H1 (cell line): ENCODE measurements at regions of chr15 and their contacts with region 1.

Region 1: GRCh38 chr15:77784395-77785292 is 151.9 kb upstream of the LINGO1 start:
- DNase-seq: peak in 1 of 2 experiments; percentile 88
- H3K4me3 ChIP-seq: no peak overlapping the region
- H3K27ac ChIP-seq: no peak overlapping the region
- H3K4me1 ChIP-seq: peaks cover 0 to 10% (median 7%) of the 10 kb centered on the region in 4 experiments; a peak in 6 of 7 replicates
- H3K27me3 ChIP-seq: no peaks in the 10 kb centered on the region
- CTCF ChIP-seq: peak; percentile 55 to 81 (median 79)
- EP300 ChIP-seq: no peak
- POLR2A ChIP-seq: no peak
- RAD21 ChIP-seq: peak; percentile 67 to 78

Region 2: DNA sequence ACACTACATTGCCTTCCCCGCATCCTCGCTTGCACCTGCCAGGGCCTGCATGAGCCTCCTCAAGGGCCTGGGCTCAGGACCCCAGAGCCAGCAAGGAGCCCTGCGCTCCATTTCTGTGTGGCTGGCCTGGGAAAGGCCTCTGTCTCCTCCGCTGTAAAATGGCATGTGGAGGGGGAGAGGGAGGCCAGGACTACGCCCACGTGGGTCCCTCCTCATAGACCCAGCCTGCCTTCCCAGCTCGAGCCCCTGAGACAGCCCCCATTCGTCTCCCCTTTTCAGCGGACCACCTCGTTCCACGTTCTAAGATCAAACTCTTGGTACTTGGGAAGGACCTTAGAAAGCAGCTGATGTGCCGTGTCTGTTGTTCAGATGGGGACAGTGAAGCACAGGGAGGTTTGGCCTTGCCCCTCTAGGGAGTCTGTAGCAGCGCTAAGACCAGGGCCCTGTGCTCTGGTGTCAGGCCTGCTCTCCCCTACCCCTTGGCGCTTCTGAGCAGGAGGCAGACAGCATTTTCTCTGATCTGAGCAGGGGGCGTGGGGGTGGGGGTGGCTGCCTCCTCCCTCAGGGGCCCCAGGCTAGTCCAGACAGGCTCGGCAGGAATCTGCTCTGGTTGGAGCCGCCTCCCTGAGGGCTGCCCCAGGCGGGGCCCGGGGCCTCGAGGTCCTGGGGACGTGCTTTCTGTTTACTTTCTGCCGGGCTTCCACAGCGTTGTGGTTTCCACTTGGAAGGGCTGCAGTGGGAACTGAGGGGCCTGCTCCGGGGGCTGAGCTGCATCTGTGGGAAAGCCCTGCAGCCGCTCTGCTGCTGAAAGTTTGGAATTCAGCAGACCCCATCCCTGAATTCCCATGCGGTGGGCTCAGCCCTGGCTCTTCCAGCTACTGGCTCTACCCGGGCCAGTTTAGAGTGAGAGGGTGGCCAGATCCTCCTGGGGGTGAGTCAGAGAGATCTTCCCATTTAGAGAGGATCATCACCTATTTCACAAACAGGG is 257.6 kb before region 1 on chr15:
- CTCF ChIA-PET with region 1: no interaction called
- POLR2A ChIA-PET with region 1: no interaction called
- DNase-seq: no peak
- H3K4me3 ChIP-seq: no peak overlapping the region; a peak in 1 of 8 replicates
- H3K27ac ChIP-seq: no peak overlapping the region
- H3K4me1 ChIP-seq: peaks cover 0 to 28% (median 6%) of the 10 kb centered on the region in 4 experiments; a peak in 6 of 7 replicates
- H3K27me3 ChIP-seq: no peaks in the 10 kb centered on the region; a peak in 1 of 7 replicates
- CTCF ChIP-seq: no peak
- EP300 ChIP-seq: no peak
- POLR2A ChIP-seq: no peak
- RAD21 ChIP-seq: no peak

Region 3: GRCh38 chr15:77659350-77660321 is 125.0 kb before region 1 on chr15:
- CTCF ChIA-PET with region 1: interaction called, 48 read pairs
- POLR2A ChIA-PET with region 1: interaction called, 3 read pairs
- DNase-seq: peak in 1 of 2 experiments; percentile 76
- H3K4me3 ChIP-seq: no peak overlapping the region
- H3K27ac ChIP-seq: no peak overlapping the region
- H3K4me1 ChIP-seq: peaks cover 0 to 16% (median 10%) of the 10 kb centered on the region in 4 experiments; a peak in 5 of 7 replicates
- H3K27me3 ChIP-seq: no peaks in the 10 kb centered on the region
- CTCF ChIP-seq: peak; percentile 53 to 66 (median 55); a peak in 3 of 4 replicates
- EP300 ChIP-seq: no peak
- POLR2A ChIP-seq: no peak
- RAD21 ChIP-seq: peak; percentile 55 to 64

Region 4: GRCh38 chr15:77702211-77702957 is 82.3 kb before region 1 on chr15:
- CTCF ChIA-PET with region 1: interaction called, 12 read pairs
- POLR2A ChIA-PET with region 1: no interaction called
- DNase-seq: peak; percentile 25 to 88
- H3K4me3 ChIP-seq: no peak overlapping the region
- H3K27ac ChIP-seq: no peak overlapping the region
- H3K4me1 ChIP-seq: peaks cover 0 to 8% (median 0%) of the 10 kb centered on the region in 4 experiments; a peak in 2 of 7 replicates
- H3K27me3 ChIP-seq: no peaks in the 10 kb centered on the region
- CTCF ChIP-seq: no peak
- EP300 ChIP-seq: no peak
- POLR2A ChIP-seq: no peak
- RAD21 ChIP-seq: peak; percentile 21 to 45; a peak in 3 of 4 replicates

Region 5: DNA sequence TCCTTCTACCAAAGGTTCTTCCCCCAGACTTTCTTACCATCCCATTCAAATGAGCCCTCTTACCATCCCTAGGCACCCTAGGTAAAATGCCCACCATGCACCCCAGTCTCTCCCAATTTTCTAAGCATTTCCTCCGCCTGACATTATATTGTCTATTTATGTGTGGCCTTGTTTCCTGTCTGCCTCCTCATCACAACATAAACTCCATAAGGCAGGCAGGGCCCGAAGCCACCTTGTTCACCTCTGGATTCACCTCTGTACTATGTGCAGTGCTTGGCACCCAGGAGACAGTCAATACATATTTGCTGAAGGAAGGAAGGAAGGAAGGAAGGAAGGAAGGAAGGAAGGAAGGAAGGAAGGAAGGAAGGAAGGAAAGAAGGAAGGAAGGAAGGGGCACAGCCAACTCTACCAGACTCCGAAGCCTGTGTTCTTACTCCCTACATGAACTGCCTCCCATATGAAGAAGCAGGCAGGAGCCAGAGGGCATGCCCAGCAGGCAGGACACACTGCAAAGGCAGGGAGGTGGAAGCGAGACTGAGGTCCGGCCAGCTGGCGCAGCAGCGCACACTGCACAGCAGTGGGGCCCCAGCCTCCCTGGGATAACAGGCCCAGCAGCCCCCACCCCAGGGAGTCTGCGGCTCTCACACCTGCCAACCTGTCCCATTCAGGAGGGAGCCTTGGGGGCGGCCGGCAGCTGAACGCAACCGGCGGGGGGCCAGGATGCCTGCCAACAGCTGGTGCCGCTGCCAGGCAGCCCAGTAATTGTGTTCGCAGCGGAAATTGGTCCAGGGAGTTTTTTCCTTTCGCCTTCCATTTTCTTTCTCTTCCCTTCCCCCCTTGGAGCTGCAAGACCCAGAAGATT is 46.0 kb before region 1 on chr15:
- CTCF ChIA-PET with region 1: interaction called, 19 read pairs
- POLR2A ChIA-PET with region 1: interaction called, 3 read pairs
- DNase-seq: peak in 1 of 2 experiments; percentile 67
- H3K4me3 ChIP-seq: peak overlapping the region in 1 of 4 experiments; percentile 38; a peak in 3 of 8 replicates
- H3K27ac ChIP-seq: no peak overlapping the region
- H3K4me1 ChIP-seq: peaks cover 11 to 36% (median 22%) of the 10 kb centered on the region in 4 experiments
- H3K27me3 ChIP-seq: no peaks in the 10 kb centered on the region; a peak in 1 of 7 replicates
- CTCF ChIP-seq: no peak
- EP300 ChIP-seq: no peak
- POLR2A ChIP-seq: no peak
- RAD21 ChIP-seq: no peak

Region 6: GRCh38 chr15:77768107-77768506 is 16.5 kb before region 1 on chr15:
- CTCF ChIA-PET with region 1: interaction called, 60 read pairs
- POLR2A ChIA-PET with region 1: no interaction called
- DNase-seq: no peak
- H3K4me3 ChIP-seq: no peak overlapping the region
- H3K27ac ChIP-seq: no peak overlapping the region
- H3K4me1 ChIP-seq: peaks cover 3 to 8% (median 4%) of the 10 kb centered on the region in 4 experiments
- H3K27me3 ChIP-seq: no peaks in the 10 kb centered on the region
- CTCF ChIP-seq: peak; percentile 28 to 38 (median 34); a peak in 3 of 4 replicates
- EP300 ChIP-seq: no peak
- POLR2A ChIP-seq: no peak
- RAD21 ChIP-seq: peak in 1 of 2 experiments; percentile 35; a peak in 2 of 4 replicates

Region 7: GRCh38 chr15:77830051-77830477 is 45.4 kb after region 1 on chr15:
- CTCF ChIA-PET with region 1: interaction called, 13 read pairs
- POLR2A ChIA-PET with region 1: no interaction called
- DNase-seq: no peak
- H3K4me3 ChIP-seq: no peak overlapping the region
- H3K27ac ChIP-seq: no peak overlapping the region
- H3K4me1 ChIP-seq: peaks cover 0 to 6% (median 3%) of the 10 kb centered on the region in 4 experiments; a peak in 2 of 7 replicates
- H3K27me3 ChIP-seq: no peaks in the 10 kb centered on the region; a peak in 1 of 7 replicates
- CTCF ChIP-seq: no peak
- EP300 ChIP-seq: no peak
- POLR2A ChIP-seq: no peak
- RAD21 ChIP-seq: no peak